ENCODE measurements at regions of chr5 and their contacts with region 1.

Region 1: GRCh38 chr5:95781101-95781583 is 41.4 kb downstream of the GLRX start:
- DNase-seq: peak; percentile 35
- H3K4me3 ChIP-seq: no peak overlapping the region
- H3K27me3 ChIP-seq: no peaks in the 10 kb centered on the region
- CTCF ChIP-seq: peak; percentile 84

Region 2: DNA sequence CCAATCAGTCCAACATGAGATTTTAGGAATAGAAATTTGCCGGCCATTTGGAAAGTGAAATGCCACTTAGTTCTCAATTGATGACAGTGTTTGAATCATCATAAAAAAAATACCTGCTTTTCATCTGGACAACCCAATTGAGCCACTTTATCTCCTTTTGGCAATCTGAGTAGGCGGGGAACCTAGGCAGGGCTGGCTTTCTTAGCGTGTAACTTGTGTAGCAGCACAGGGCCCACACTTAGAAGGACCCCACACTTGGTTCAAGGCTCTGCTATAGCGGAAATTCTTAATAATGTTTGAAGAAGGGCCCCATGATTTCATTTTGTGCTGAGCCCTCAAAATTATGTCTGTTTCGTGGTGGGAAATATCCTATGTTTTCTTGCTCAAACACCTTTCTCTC is 12.5 kb after region 1 on chr5:
- CTCF ChIA-PET with region 1: interaction called, 27 read pairs
- POLR2A ChIA-PET with region 1: no interaction called
- DNase-seq: no peak
- H3K4me3 ChIP-seq: no peak overlapping the region
- H3K27me3 ChIP-seq: no peaks in the 10 kb centered on the region
- CTCF ChIP-seq: no peak

Region 3: GRCh38 chr5:95808686-95809413 is 27.7 kb after region 1 on chr5:
- CTCF ChIA-PET with region 1: interaction called, 22 read pairs
- POLR2A ChIA-PET with region 1: no interaction called
- DNase-seq: no peak
- H3K4me3 ChIP-seq: no peak overlapping the region
- H3K27me3 ChIP-seq: no peaks in the 10 kb centered on the region
- CTCF ChIP-seq: no peak

Region 4: GRCh38 chr5:95835682-95836385 is 54.7 kb after region 1 on chr5:
- CTCF ChIA-PET with region 1: interaction called, 11 read pairs
- POLR2A ChIA-PET with region 1: interaction called, 12 read pairs
- DNase-seq: no peak
- H3K4me3 ChIP-seq: no peak overlapping the region
- H3K27me3 ChIP-seq: no peaks in the 10 kb centered on the region
- CTCF ChIP-seq: no peak